Activated CD4-positive, alpha-beta T cell treated with anti-CD3 and anti-CD28 coated beads, Interleukin-2, amount 10 ng/mL, durations not matched to agents 24 days and 14 days (primary cell): ENCODE measurements at regions of chr7 and their contacts with region 1.

Region 1: GRCh38 chr7:4725014-4725849 is 43.1 kb downstream of the FOXK1 start:
- DNase-seq: peak; percentile 90
- H3K4me3 Mint-ChIP-seq: peak overlapping the region; percentile 82
- H3K27ac Mint-ChIP-seq: peak overlapping the region; percentile 93
- H3K4me1 Mint-ChIP-seq: peaks cover 29% of the 10 kb centered on the region
- H3K27me3 Mint-ChIP-seq: no peaks in the 10 kb centered on the region

Region 2: GRCh38 chr7:4659551-4660286 is 65.5 kb before region 1 on chr7:
- intact Hi-C with region 1: no loop called
- DNase-seq: no peak
- H3K4me3 Mint-ChIP-seq: no peak overlapping the region
- H3K27ac Mint-ChIP-seq: no peak overlapping the region
- H3K4me1 Mint-ChIP-seq: peaks cover 2% of the 10 kb centered on the region
- H3K27me3 Mint-ChIP-seq: no peaks in the 10 kb centered on the region

Region 3: DNA sequence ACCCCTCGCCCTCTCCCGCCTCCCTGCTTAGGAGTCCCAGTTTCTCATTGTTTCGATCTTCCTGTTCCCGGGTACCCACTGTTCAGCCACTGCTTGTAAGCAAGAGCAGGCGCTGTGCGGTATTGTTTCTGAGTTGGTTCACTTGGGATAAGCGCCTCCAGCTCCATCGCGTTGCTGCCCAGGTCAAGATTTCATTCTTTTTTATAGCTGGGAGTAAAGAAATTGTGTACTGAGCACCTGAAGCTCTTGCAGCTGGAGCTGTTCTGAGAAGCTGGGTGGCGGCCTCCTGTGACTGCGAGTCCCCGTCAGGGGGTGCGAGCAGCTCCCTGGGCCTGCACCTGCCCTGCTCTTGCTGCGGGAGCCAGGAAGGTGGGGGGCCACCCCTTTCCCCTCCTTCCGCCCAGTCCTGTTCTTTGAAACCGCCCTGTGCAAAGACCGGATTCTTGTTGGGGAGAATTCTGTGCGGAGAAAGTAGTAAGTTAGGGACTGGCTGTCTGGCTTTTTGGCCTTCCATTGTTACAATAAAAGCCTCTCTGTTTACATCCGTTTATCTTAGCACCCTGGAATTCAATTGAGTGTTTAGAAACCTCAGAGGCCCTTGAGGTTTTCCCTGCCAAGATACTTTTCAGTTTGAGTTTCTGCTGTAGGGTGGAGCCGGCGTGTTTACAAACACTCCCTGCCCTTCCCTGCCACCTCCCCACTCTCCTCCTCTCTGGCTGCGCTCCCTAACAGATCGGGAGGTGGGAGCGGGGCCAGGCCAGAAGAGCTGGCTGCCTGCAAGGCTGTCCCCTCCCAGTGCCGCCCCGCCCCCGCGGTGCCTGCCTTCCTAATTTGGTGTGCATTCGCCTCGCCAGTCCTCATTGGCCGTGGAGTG is 19.4 kb after region 1 on chr7:
- intact Hi-C with region 1: loop called (anchors 1 kb)
- DNase-seq: peak; percentile 95
- H3K4me3 Mint-ChIP-seq: peak overlapping the region; percentile 89
- H3K27ac Mint-ChIP-seq: peak overlapping the region; percentile 94
- H3K4me1 Mint-ChIP-seq: peaks cover 66% of the 10 kb centered on the region
- H3K27me3 Mint-ChIP-seq: no peaks in the 10 kb centered on the region

Region 4: DNA sequence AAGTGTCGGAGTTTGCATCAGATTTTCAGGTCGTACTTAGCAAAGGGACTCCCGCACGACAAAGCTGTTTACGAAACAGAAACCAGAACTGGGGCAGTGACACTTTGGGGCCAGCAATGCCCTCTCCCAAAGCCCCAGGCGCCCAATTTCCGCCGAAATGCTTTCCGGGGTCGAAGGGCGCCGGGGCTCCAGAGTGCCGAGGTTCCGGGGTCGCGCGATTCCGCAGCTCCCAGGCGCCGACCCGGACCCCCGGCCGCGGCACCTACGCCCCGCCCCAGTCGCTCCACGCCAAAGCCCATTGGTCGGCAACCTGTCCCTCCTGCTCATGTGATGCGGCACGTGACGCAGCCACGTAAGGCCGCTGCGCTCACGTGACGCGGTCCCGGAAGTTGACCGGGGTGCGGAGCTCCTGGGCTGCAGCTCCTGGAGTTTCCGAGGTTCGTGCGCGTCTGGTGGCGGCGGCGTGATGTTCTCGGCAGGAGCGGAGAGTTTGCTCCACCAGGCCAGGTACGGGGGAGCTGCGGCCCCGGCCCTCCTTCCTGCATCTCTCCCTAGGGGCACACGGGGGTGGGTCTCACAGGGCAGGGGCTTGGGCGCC is 50.1 kb after region 1 on chr7 and contains the start of gene AP5Z1:
- intact Hi-C with region 1: no loop called
- DNase-seq: peak; percentile 98
- H3K4me3 Mint-ChIP-seq: peak within 1 kb of the TSS; percentile 97
- H3K27ac Mint-ChIP-seq: peak within 1 kb of the TSS; percentile 97
- H3K4me1 Mint-ChIP-seq: peaks cover 36% of the 10 kb centered on the region
- H3K27me3 Mint-ChIP-seq: no peaks in the 10 kb centered on the region
- total RNA-seq, gene AP5Z1: 42.2 and 44.4 TPM in 2 replicates